Activated T-helper 1 cell treated with anti-CD3 and anti-CD28 coated beads, Interleukin-12 subunit alpha, Interleukin-12 subunit beta, Interleukin-2, Interleukin-4 antibody, amounts not matched to agents 30 ng/mL and 10 ng/mL and 1 ng/mL, durations not matched to agents 14 hours and 24 hours and 36 hours (primary cell): ENCODE measurements at regions of chr6 and their contacts with region 1.

Region 1: GRCh38 chr6:167219967-167220512 is 62.3 kb upstream of the GPR31 start:
- DNase-seq: no peak
- H3K4me3 Mint-ChIP-seq: no peak overlapping the region
- H3K27ac Mint-ChIP-seq: no peak overlapping the region
- H3K4me1 Mint-ChIP-seq: no peaks in the 10 kb centered on the region
- H3K27me3 Mint-ChIP-seq: peaks cover 8% of the 10 kb centered on the region

Region 2: DNA sequence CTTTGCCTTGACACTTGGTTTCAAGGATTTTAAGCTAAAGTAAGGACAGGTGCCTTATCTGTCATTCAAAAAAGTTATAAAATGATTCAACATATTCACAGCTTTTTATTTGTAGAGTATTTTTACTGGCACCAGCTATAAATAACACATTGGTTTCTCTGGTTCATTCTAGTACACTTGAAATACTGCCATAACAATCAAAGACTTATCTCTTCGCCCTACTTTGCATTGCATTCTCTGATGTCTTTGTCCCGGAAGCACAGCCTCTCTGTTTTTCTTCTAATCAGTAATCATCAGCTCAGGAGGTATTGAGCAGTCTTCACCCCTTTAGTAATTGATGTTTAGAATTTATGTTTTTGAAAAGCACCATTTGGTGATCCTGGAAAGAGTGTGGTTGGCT is 1713.4 kb before region 1 on chr6:
- intact Hi-C with region 1: no loop called
- DNase-seq: no peak
- H3K4me3 Mint-ChIP-seq: no peak overlapping the region
- H3K27ac Mint-ChIP-seq: no peak overlapping the region
- H3K4me1 Mint-ChIP-seq: peaks cover 6% of the 10 kb centered on the region
- H3K27me3 Mint-ChIP-seq: no peaks in the 10 kb centered on the region

Region 3: DNA sequence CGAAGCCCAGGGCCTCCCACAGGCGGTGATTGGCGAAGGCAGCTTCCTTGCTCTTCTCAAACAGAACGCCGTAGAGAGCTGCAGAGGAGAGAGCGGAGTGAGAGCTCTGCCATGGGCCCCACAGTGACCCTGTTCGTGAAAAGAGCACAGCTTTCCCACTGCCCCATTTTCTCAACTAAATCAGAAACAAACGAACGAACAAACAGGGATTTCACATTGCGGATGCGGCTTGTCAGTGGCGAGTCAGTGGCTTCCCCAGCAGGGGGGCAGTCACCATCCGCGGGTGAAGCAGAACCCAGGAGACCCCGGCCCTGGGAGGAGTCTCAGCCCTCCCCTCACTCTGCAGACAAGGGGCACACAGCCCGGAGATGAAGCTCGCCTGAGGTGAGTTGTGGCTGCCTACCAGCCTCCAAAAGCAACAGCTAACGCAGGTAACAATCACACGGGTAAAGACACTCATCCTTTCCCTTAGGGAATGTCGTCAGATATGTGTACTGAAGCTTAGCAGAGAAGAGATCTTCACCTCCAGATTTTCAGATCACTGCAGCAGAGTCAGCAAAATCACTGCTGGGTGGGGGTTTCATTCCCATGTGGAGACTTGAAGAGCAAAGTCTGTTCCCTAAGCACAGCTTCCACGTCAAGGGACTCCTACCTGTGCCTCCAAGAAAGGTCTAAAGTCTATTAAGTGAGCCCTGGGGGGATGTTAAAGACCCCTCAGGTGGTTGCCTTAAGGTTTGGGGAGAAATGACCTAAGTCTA is 11.0 kb before region 1 on chr6:
- intact Hi-C with region 1: no loop called
- DNase-seq: no peak
- H3K4me3 Mint-ChIP-seq: no peak overlapping the region
- H3K27ac Mint-ChIP-seq: no peak overlapping the region
- H3K4me1 Mint-ChIP-seq: peaks cover 6% of the 10 kb centered on the region
- H3K27me3 Mint-ChIP-seq: peaks cover 3% of the 10 kb centered on the region

Region 4: DNA sequence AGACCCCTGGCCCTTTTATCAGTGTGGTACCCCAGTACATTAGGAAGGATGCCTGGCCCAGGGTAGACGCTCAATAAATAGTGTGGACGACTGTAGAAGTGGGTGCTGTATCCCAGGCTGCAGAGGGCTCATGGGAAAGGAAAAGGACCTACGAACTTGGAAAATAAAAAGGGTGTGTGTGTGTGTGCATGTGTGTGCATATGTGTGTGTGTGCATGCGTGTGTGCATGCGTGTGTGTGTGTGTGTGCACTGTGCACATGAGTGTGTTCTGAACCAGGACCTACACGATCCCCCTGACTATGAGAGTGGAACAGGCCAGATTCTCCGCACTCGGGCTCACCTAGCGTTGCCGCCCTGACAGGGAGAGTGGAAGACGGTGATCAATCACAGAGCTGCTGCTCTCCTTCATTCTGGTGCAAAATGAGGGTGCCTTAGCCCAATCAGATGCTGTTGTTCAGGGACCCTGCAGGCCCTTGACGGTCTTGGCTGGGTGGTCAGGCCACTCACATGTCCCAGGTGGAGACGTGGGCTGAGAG is 67.5 kb after region 1 on chr6:
- intact Hi-C with region 1: loop called (anchors 2 kb)
- DNase-seq: no peak
- H3K4me3 Mint-ChIP-seq: no peak overlapping the region
- H3K27ac Mint-ChIP-seq: no peak overlapping the region
- H3K4me1 Mint-ChIP-seq: no peaks in the 10 kb centered on the region
- H3K27me3 Mint-ChIP-seq: peaks cover 5% of the 10 kb centered on the region

Region 5: DNA sequence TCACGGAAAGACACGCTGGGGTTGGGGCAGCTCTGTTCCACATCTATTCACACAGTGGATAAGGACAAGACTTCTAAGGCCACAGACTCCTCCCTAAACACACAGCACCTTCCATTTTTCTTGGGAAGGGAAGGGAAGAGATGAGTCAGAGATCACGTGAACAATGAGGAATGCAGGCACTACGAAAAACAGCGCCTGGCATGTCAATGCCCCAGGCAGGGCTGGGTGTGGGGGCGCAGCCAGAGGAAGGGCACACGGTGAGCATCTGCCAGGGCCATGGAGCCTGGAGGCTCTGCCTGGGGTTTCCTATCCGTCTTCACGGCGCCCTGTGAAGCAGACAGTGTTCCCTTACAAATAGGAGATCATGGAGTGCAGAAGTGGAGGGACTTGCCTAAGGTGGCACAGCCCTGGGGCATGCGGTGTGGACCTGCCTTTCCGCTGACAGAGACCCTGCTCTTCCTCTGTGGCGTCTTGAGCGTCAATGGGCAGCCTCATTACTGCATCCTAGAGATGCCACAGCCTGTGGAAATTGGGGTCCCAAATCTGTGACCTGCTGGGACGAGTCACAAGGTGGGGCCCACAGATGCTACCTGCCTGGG is 86.5 kb after region 1 on chr6:
- intact Hi-C with region 1: no loop called
- DNase-seq: no peak
- H3K4me3 Mint-ChIP-seq: no peak overlapping the region
- H3K27ac Mint-ChIP-seq: no peak overlapping the region
- H3K4me1 Mint-ChIP-seq: no peaks in the 10 kb centered on the region
- H3K27me3 Mint-ChIP-seq: peaks cover 1% of the 10 kb centered on the region

Region 6: GRCh38 chr6:167980911-167981580 is 761.0 kb after region 1 on chr6:
- intact Hi-C with region 1: no loop called
- DNase-seq: no peak
- H3K4me3 Mint-ChIP-seq: no peak overlapping the region
- H3K27ac Mint-ChIP-seq: no peak overlapping the region
- H3K4me1 Mint-ChIP-seq: no peaks in the 10 kb centered on the region
- H3K27me3 Mint-ChIP-seq: peaks cover 4% of the 10 kb centered on the region